Activated naive CD4-positive, alpha-beta T cell treated with anti-CD3 and anti-CD28 coated beads, Interleukin-2, amount 10 ng/mL, durations not matched to agents 7 days and 5 days (primary cell): ENCODE measurements at regions of chr17 and their contacts with region 1.

Region 1: GRCh38 chr17:32997753-32998632 is 6.3 kb downstream of the SPACA3 start:
- DNase-seq: peak; percentile 80
- H3K4me3 Mint-ChIP-seq: no peak overlapping the region
- H3K27ac Mint-ChIP-seq: no peak overlapping the region
- H3K4me1 Mint-ChIP-seq: peaks cover 2% of the 10 kb centered on the region
- H3K27me3 Mint-ChIP-seq: peaks cover 24% of the 10 kb centered on the region

Region 2: GRCh38 chr17:32936894-32937500 is 61.0 kb before region 1 on chr17:
- CTCF ChIA-PET with region 1: interaction called, 13 read pairs
- DNase-seq: peak; percentile 73
- H3K4me3 Mint-ChIP-seq: no peak overlapping the region
- H3K27ac Mint-ChIP-seq: no peak overlapping the region
- H3K4me1 Mint-ChIP-seq: peaks cover 2% of the 10 kb centered on the region
- H3K27me3 Mint-ChIP-seq: peaks cover 45% of the 10 kb centered on the region